Right cardiac atrium (tissue), 5 donors: ENCODE measurements at regions of chr7 and their contacts with region 1.

Region 1: DNA sequence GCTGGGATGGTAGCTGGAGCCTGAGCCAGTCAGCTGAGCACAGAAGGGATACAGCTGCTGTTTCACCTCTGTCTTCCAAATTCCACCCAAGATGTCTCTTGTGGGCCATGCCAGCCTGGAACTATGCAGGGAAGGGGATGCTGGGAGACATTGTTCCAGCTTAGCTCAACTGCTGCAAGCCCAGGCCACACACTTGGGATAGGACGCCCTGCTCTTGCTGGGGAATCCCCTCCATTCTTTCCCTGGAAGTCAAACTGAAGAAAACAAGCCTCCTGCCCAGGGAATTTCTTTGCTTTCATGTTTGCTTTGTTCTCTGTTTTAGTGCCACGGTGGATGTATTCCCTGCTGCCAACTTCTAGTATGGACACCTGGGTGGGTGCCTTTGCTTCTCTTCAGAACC is 55.2 kb upstream of the CDK13 start:
- DNase-seq: peak in 1 of 3 donors; percentile 14
- ATAC-seq: no peak
- H3K4me3 ChIP-seq: no peak overlapping the region
- H3K27ac ChIP-seq: no peak overlapping the region
- H3K4me1 ChIP-seq: no peaks in the 10 kb centered on the region
- H3K27me3 ChIP-seq: no peaks in the 10 kb centered on the region

Region 2: GRCh38 chr7:39686261-39686924 is 208.5 kb before region 1 on chr7:
- intact Hi-C with region 1: no loop called
- DNase-seq: no peak
- ATAC-seq: no peak
- H3K4me3 ChIP-seq: no peak overlapping the region
- H3K27ac ChIP-seq: no peak overlapping the region
- H3K4me1 ChIP-seq: peaks cover 11% of the 10 kb centered on the region
- H3K27me3 ChIP-seq: no peaks in the 10 kb centered on the region

Region 3: GRCh38 chr7:40057292-40057691 is 162.4 kb after region 1 on chr7:
- intact Hi-C with region 1: loop called (anchors 2 to 5 kb)
- DNase-seq: peak in 1 of 3 donors; percentile 40
- ATAC-seq: peak; percentile 77 to 85
- H3K4me3 ChIP-seq: no peak overlapping the region
- H3K27ac ChIP-seq: no peak overlapping the region
- H3K4me1 ChIP-seq: peaks cover 2% of the 10 kb centered on the region
- H3K27me3 ChIP-seq: no peaks in the 10 kb centered on the region

Region 4: GRCh38 chr7:40105879-40106473 is 211.1 kb after region 1 on chr7:
- intact Hi-C with region 1: no loop called
- DNase-seq: no peak
- ATAC-seq: peak in 1 of 2 donors; percentile 38
- H3K4me3 ChIP-seq: no peak overlapping the region
- H3K27ac ChIP-seq: no peak overlapping the region
- H3K4me1 ChIP-seq: no peaks in the 10 kb centered on the region
- H3K27me3 ChIP-seq: no peaks in the 10 kb centered on the region

Region 5: GRCh38 chr7:40371806-40372440 is 477.0 kb after region 1 on chr7:
- intact Hi-C with region 1: no loop called
- DNase-seq: no peak
- ATAC-seq: no peak
- H3K4me3 ChIP-seq: no peak overlapping the region
- H3K27ac ChIP-seq: no peak overlapping the region
- H3K4me1 ChIP-seq: no peaks in the 10 kb centered on the region
- H3K27me3 ChIP-seq: no peaks in the 10 kb centered on the region